HCT116 (cell line): ENCODE measurements at regions of chr3 and their contacts with region 1.

Region 1: GRCh38 chr3:141959921-141960554 is 83.6 kb downstream of the ATP1B3 start:
- DNase-seq: peak; percentile 12
- ATAC-seq: peak; percentile 63; the same call in 1 of the 2 replicates
- H3K4me3 ChIP-seq: no peak overlapping the region
- H3K27ac ChIP-seq: peak overlapping the region; percentile 52; the same call in 1 of the 2 replicates
- H3K4me1 ChIP-seq: peaks cover 17 to 18% of the 10 kb centered on the region in 2 experiments
- H3K27me3 ChIP-seq: no peaks in the 10 kb centered on the region
- CTCF ChIP-seq: no peak
- POLR2A ChIP-seq: no peak
- RAD21 ChIP-seq: no peak

Region 2: DNA sequence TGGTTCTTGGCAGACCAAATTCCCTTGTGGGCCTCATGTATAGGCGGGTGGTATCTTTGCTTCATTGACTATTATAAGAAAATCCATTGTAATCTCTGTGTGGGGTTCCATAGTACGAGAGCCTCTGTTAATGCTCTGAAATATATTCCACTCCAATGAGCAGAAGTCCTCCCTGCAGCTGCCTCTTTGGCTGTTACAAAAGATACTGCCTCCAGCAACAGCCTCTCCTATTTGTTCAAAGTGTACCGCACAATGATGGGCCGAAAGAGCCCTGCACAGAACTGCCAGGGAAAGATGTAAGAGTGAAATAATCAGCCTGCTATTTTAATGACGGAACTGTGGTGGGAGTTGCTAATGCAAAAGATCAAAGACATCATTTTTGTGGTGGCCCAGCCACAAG is 148.0 kb before region 1 on chr3:
- CTCF ChIA-PET with region 1: no interaction called
- POLR2A ChIA-PET with region 1: no interaction called
- RAD21 ChIA-PET with region 1: no interaction called
- intact Hi-C with region 1: no loop called
- DNase-seq: no peak
- ATAC-seq: no peak
- H3K4me3 ChIP-seq: no peak overlapping the region
- H3K27ac ChIP-seq: no peak overlapping the region
- H3K4me1 ChIP-seq: no peaks in the 10 kb centered on the region
- H3K27me3 ChIP-seq: no peaks in the 10 kb centered on the region
- CTCF ChIP-seq: no peak
- POLR2A ChIP-seq: no peak
- RAD21 ChIP-seq: no peak

Region 3: DNA sequence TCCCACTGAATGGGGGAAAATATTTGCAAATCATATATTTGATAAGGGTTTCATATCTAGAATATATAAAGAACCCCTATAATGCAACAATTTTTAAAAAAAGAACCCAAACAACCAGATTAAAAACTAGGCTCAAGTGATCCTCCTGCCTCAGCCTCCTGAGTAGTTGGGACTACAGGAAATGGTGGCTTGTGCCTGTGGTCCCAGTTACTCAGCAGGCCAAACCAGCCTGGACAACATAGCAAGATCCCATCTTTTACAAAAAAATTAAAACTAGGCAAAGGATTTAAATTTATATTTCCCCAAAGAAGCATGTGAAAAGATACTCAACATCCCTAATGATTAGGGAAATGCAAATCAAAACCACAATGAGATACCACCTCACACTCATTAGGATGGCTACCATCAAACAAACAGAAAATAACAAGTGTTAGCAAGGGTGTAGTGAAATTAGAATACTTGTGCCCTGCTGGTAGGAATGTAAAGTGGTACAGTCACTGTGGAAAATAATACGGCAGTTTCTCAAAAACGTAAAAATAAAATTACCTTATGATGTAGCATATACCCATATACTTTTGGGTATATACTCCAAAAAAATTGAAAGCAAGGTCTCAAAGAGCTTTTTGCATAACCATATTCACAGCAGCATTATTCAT is 169.6 kb after region 1 on chr3:
- CTCF ChIA-PET with region 1: no interaction called
- POLR2A ChIA-PET with region 1: no interaction called
- RAD21 ChIA-PET with region 1: no interaction called
- intact Hi-C with region 1: loop called (anchors 5 kb)
- DNase-seq: no peak
- ATAC-seq: no peak
- H3K4me3 ChIP-seq: no peak overlapping the region
- H3K27ac ChIP-seq: no peak overlapping the region
- H3K4me1 ChIP-seq: no peaks in the 10 kb centered on the region
- H3K27me3 ChIP-seq: no peaks in the 10 kb centered on the region
- CTCF ChIP-seq: peak in 2 of 3 experiments; percentile 23 to 54; a peak in 3 of 6 replicates
- POLR2A ChIP-seq: no peak
- RAD21 ChIP-seq: no peak